ENCODE measurements at regions of chr6 and their contacts with region 1.

Region 1: GRCh38 chr6:13614926-13615798 is at the start of gene NOL7:
- DNase-seq: peak; percentile 98
- ATAC-seq: peak; percentile 95 to 98 (median 98)
- H3K4me3 ChIP-seq: peak within 1 kb of the TSS; percentile 68 to 99 (median 90)
- H3K27ac ChIP-seq: peak within 1 kb of the TSS; percentile 43 to 95 (median 90)
- H3K4me1 ChIP-seq: peaks cover 2 to 54% (median 37%) of the 10 kb centered on the region in 9 donors
- H3K27me3 ChIP-seq: no peaks in the 10 kb centered on the region
- CTCF ChIP-seq: peak; percentile 81 to 98 (median 93)
- total RNA-seq, gene NOL7: 41.5 to 55.8 (median 46.8) TPM

Region 2: DNA sequence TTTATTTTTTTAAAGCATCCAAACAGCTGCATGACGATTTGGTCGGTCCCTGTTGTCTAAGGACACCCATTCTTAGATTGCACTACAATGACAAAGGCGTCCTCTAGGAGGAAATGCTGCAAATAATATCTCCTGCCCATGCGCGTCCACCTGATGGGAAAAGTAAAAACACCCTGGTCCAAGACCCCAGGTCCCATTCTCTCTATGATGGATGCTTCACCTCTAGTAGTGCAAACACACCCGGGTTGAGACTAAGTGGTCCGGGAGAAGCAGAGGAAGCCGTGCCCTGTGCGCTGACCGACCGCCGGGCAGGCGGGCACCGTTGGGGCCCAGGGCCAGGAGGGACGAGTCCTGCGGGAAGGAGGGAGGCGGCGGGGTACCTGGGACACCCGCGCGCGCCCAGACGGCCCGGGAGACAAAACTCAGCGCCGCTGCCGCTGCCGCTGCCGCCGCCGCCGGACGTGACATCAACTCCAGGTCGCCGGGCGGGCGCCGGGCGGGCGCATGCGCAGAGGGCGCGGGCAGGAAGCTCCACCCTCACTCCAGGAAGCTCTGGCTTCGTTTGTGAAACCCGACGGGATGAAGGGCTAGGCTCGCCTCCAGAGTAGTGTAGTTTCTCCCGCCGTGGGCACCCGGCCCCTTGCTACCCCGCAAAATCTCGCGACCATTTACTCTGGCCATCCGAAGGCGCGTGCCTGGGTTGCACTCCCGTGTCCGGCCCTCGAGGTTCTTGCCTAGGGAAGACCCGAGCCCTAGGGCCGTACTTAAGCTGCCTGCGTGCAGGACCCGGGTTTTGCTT is 286.9 kb before region 1 on chr6 and contains the start of gene TBC1D7:
- intact Hi-C with region 1: loop called in 2 of 10 experiments (anchors 5 to 10 kb)
- DNase-seq: peak; percentile 91 to 95
- ATAC-seq: peak; percentile 93 to 98 (median 96)
- H3K4me3 ChIP-seq: peak within 1 kb of the TSS; percentile 75 to 95 (median 82)
- H3K27ac ChIP-seq: peak within 1 kb of the TSS; percentile 71 to 98 (median 95)
- H3K4me1 ChIP-seq: peaks cover 0 to 45% (median 21%) of the 10 kb centered on the region in 9 donors
- H3K27me3 ChIP-seq: no peaks in the 10 kb centered on the region
- CTCF ChIP-seq: peak in 2 of 9 donors; percentile 15 to 17
- total RNA-seq, gene TBC1D7: 21.7 to 42.6 (median 28.6) TPM

Region 3: DNA sequence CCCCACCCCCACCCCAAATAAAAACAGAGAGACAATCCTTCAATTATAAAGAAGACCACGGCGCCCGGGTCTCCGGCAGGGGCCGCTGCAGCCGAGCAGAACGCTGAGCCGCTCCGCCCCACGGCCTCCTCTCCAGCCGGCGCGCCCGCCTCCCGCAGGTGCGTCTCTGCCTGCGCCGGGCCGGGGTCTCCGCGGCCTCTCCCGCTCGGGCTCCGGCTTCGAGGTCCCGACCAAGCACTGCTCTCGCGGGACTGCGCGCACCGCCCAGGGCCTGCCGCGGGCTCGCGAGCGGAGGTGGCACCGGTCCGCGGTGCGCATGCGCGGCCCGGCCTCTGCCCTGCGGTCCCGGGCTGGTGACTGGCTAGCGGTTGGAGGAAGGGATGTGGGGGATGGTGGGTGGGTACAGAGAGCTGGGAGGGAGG is 41.0 kb before region 1 on chr6:
- intact Hi-C with region 1: loop called in 2 of 10 experiments (anchors 5 kb)
- DNase-seq: peak; percentile 92 to 93
- ATAC-seq: peak; percentile 95 to 97 (median 96)
- H3K4me3 ChIP-seq: peak overlapping the region; percentile 53 to 90 (median 74)
- H3K27ac ChIP-seq: peak overlapping the region; percentile 87 to 100 (median 98)
- H3K4me1 ChIP-seq: peaks cover 4 to 32% (median 21%) of the 10 kb centered on the region in 9 donors
- H3K27me3 ChIP-seq: no peaks in the 10 kb centered on the region
- CTCF ChIP-seq: peak; percentile 30 to 76 (median 49)

Region 4: DNA sequence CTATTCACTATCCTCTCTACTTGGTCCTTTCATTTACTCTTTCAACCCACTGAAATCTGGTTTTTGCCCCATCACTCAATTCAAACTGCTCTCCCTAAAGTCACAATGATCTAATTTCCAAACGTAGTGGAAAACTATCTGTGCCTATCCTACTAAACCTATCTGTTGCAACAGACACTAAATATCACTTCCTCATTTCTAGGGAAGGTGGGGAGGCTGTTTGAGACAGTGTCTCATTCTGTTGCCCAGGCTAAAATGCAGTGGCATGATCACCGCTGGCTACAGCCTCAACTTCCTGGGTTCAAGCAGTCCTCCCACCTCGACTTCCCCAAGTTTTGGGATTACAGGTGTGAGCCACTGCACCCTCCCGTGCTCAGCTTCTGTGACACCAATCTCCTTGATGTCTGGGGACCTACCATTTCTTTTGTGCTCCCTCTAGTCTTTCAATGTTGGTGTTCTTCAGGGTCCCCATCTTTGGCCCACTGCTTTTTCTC is 87.7 kb after region 1 on chr6:
- intact Hi-C with region 1: loop called in 2 of 10 experiments (anchors 5 to 10 kb)
- DNase-seq: no peak
- ATAC-seq: no peak
- H3K4me3 ChIP-seq: no peak overlapping the region
- H3K27ac ChIP-seq: no peak overlapping the region
- H3K4me1 ChIP-seq: peaks cover 0 to 52% (median 27%) of the 10 kb centered on the region in 9 donors
- H3K27me3 ChIP-seq: no peaks in the 10 kb centered on the region
- CTCF ChIP-seq: no peak

Region 5: DNA sequence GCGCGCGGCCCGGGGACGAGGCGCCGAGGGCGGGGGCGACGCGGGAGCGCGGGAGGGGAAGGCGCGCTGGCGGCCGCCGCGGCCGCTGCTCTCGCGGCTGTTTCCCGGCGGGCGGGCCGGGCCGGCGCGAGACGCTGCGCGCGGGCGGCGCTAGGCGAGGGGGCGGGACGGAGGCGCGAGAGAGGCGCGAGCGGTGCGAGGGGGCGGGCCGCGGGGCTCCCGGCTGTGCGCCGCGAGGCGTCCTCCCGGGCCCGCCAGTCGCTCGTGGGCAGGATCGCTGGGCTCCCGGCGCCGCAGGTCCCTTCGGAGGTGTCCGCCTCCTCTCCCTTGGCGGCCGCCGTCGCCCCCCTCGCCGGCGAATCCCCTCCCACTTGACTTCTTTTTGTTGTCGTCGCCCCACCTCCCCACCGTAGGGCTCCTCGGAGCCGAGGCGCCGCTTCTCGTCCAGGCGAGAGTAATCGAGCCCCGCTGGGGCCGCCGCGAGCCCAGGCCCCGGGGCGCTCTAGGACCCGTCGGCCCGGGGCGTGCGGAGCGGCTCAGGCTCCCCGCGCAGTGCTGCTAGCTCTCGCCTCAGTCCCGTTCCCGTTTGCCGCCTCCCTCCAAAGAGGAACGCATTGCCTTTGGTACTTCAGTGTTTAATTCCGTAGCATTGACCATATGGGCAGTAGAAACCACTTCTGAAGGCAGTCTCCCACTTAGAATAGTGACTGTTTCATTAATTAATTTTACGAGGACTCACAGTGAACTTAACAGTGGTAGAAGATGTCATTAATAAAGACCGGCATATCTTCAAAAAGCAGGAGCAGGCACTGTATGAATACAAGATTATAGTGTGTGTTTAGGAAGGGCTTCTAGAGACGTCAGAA is 96.8 kb after region 1 on chr6 and contains the start of gene RANBP9:
- intact Hi-C with region 1: loop called in 7 of 10 experiments (anchors 2 to 10 kb)
- DNase-seq: peak; percentile 88 to 89
- ATAC-seq: peak; percentile 92 to 97 (median 94)
- H3K4me3 ChIP-seq: peak within 1 kb of the TSS; percentile 57 to 88 (median 82)
- H3K27ac ChIP-seq: peak within 1 kb of the TSS; percentile 88 to 96 (median 93)
- H3K4me1 ChIP-seq: peaks cover 0 to 43% (median 36%) of the 10 kb centered on the region in 9 donors
- H3K27me3 ChIP-seq: no peaks in the 10 kb centered on the region
- CTCF ChIP-seq: peak in 1 of 9 donors; percentile 4
- total RNA-seq, gene RANBP9: 29.4 to 41.6 (median 35.9) TPM

Region 6: GRCh38 chr6:13767121-13767808 is 152.1 kb after region 1 on chr6:
- intact Hi-C with region 1: loop called in 1 of 10 experiments (anchors 10 kb)
- DNase-seq: peak; percentile 35 to 78
- ATAC-seq: peak; percentile 86 to 96 (median 92)
- H3K4me3 ChIP-seq: peak overlapping the region in 9 of 10 donors; percentile 15 to 53 (median 44)
- H3K27ac ChIP-seq: peak overlapping the region in 7 of 10 donors; percentile 22 to 69 (median 52)
- H3K4me1 ChIP-seq: peaks cover 0 to 39% (median 13%) of the 10 kb centered on the region in 9 donors
- H3K27me3 ChIP-seq: no peaks in the 10 kb centered on the region
- CTCF ChIP-seq: peak in 6 of 9 donors; percentile 26 to 50 (median 35)

Region 7: DNA sequence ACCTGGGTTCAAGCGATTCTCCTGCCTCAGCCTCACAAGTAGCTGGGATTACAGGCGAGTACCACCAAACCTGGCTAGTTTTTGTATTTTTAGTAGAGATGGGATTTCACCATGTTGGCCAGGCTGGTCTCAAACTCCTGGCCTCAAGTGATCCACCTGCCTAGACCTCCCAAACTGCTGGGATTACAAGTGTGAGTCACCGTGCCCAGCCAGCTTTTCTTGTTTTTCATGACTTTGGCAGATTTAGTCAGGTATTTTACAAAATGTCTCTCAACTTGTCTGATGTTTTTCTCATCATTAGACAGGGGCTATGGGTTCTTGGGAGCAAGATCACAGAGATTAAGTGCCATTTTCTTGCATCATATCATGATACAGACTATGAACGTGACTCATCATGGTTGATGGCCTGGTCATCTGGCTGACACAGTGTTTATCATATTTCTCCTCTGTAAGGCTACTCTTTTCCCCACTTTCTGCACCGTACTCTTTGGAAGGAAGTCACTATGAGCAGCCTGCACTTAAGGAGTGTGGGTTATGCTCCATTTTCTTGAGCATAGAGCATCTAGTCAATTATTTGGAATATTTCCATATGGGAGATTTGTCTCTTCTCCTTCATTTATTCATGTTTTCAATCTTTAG is 377.4 kb after region 1 on chr6:
- intact Hi-C with region 1: no loop called
- DNase-seq: no peak
- ATAC-seq: no peak
- H3K4me3 ChIP-seq: no peak overlapping the region
- H3K27ac ChIP-seq: no peak overlapping the region
- H3K4me1 ChIP-seq: no peaks in the 10 kb centered on the region
- H3K27me3 ChIP-seq: peaks cover 0 to 44% (median 27%) of the 10 kb centered on the region in 7 donors
- CTCF ChIP-seq: no peak

Measured in heart right ventricle (tissue), 16 donors.